Posterior vena cava (tissue), 2 donors: ENCODE measurements at regions of chr3 and their contacts with region 1.

Region 1: DNA sequence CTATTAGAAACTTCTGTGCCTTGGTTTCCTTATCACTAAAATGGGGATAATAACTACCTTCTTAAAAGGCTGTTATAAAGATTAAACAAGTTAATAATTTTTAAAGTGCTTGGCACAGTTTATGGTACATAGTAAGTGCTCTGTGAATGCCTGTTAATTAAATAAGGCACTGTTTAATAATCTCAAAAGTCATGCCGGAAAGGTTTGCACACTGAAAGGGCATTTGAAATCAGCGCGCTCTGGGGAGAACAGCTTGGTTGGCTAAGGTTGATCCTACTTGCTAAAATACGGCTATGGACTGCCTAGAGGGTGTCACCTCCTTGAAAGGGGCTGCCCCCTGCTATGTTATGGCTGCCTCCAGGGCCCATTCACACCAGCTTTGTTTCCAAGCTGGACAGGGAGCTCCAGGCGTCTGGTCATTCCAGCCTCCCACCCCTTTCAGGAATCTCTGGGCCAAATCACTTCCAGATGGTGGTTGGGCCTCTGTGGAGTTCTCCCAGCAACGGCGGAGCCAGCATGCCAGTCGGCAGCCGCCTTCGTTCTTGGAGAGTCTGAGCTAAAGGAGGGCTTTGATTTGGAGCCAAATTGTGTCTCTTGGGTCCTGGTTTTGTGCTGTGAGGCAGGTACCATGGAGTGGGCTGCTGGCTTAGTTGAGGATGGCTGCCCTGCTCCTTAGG is 5.9 kb downstream of the FLNB start:
- DNase-seq: peak; percentile 85

Region 2: GRCh38 chr3:58144478-58145325 is 130.6 kb after region 1 on chr3:
- intact Hi-C with region 1: loop called in 1 of 2 experiments (anchors 10 kb)
- DNase-seq: peak; percentile 10